ENCODE measurements at regions of chr19 and their contacts with region 1.

Region 1: DNA sequence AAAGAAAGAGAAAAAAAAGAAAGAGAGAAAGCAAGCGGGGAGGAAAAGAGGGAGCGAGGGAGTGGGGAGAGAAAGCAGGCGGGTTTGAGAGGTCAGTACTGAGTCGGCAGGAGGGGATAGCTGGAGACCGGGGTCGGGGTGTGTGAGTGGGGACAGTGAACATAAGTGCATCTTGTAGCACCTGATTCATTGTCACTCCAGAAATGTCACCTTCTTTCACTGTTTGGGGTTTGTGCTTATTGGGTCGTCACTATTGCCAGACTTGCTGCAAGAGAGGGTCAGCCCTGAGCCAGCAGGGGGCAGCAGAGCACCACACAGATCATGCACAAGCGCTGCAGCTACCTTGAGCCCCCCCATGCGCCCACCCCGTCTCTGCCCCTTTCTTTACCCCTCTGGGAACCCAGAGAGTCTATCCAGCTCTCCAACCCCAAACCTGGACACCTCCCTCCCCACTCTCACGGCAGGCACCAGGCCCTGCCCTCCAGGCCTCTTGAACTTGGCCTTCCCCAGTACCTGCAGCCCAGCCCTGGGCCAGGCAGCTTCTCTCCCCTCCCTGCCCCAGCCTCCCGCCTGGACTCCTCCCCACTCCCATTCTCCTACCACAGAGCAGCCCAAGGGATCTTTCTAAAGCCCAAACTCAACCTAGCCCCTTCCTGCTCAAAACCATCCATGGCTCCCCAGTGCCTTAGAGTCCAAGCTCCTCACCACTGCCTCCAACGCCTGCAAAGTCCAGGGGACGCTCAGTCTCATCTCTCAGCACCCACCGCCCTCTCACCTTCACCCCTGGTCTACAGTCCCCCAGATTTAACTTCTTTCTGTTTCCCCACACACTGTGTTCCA is 9.7 kb upstream of the CEACAM16 start:
- H3K4me3 ChIP-seq: no peak overlapping the region
- H3K27ac ChIP-seq: no peak overlapping the region
- H3K4me1 ChIP-seq: 0 out of 2 replicates have a peak, but pooled peaks cover 3% of the 10 kb centered on the region
- CTCF ChIP-seq: peak; percentile 93

Region 2: GRCh38 chr19:44576843-44577565 is 112.3 kb before region 1 on chr19:
- CTCF ChIA-PET with region 1: interaction called, 20 read pairs
- POLR2A ChIA-PET with region 1: no interaction called
- H3K4me3 ChIP-seq: no peak overlapping the region
- H3K27ac ChIP-seq: no peak overlapping the region
- H3K4me1 ChIP-seq: no peaks in the 10 kb centered on the region
- CTCF ChIP-seq: peak; percentile 50

Region 3: GRCh38 chr19:44677019-44677821 is 12.1 kb before region 1 on chr19:
- CTCF ChIA-PET with region 1: interaction called, 19 read pairs
- POLR2A ChIA-PET with region 1: no interaction called
- H3K4me3 ChIP-seq: no peak overlapping the region
- H3K27ac ChIP-seq: no peak overlapping the region
- H3K4me1 ChIP-seq: 0 out of 2 replicates have a peak, but pooled peaks cover 2% of the 10 kb centered on the region
- CTCF ChIP-seq: no peak

Region 4: GRCh38 chr19:44705502-44706010 is 16.3 kb after region 1 on chr19:
- CTCF ChIA-PET with region 1: interaction called, 12 read pairs
- POLR2A ChIA-PET with region 1: no interaction called
- H3K4me3 ChIP-seq: no peak overlapping the region
- H3K27ac ChIP-seq: no peak overlapping the region
- H3K4me1 ChIP-seq: no peaks in the 10 kb centered on the region
- CTCF ChIP-seq: no peak

Region 5: DNA sequence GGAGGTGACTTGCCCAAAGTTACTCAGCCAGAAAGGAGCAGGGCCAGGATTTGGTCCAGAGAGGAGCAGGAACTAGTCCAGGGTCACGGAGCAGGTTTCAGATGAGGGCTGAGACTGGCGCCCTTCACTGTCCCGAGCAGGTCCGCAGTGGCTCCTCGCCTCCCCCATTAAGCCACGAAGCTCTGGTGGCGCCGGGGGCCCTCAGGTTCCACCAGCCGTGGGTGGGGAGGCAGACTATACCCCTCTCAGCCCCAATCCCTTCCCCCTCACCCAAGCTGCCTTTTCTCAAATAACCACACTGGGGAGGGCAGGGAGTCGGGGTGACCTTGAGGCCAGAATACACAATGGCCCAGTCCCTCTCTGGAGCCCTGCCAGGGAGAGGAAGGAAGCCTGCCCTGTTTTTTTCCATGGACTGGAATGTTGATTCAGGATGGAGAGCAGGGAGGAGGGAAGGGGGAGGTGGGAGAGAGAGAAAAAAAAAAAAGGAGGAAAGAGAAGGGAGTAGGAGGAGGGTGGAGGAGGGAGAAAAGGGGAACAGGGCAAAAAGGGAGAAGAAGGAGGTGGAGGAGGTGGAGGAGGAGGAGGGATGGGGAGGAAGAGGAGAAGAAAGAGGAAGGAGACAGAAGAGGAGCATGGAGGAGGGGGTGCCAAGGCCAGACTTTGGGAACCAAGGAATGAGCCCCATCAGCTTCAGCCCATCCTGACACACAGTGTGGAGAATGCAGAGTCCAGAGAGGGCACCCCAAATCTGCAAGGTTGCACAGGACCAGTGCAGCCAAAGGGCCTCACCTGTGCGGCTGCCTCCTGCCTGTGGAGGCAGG is 29.4 kb after region 1 on chr19:
- CTCF ChIA-PET with region 1: interaction called, 79 read pairs
- POLR2A ChIA-PET with region 1: interaction called, 5 read pairs
- H3K4me3 ChIP-seq: no peak overlapping the region
- H3K27ac ChIP-seq: no peak overlapping the region
- H3K4me1 ChIP-seq: peaks cover 9% of the 10 kb centered on the region
- CTCF ChIP-seq: no peak

Region 6: GRCh38 chr19:44782729-44783128 is 93.5 kb after region 1 on chr19:
- CTCF ChIA-PET with region 1: interaction called, 27 read pairs
- POLR2A ChIA-PET with region 1: no interaction called
- H3K4me3 ChIP-seq: no peak overlapping the region
- H3K27ac ChIP-seq: no peak overlapping the region
- H3K4me1 ChIP-seq: no peaks in the 10 kb centered on the region
- CTCF ChIP-seq: no peak